ENCODE measurements at regions of chr7 and their contacts with region 1.

Region 1: GRCh38 chr7:125169088-125169487 is 239.5 kb upstream of the POT1 start:
- DNase-seq: no peak
- H3K4me3 Mint-ChIP-seq: no peak overlapping the region
- H3K27ac Mint-ChIP-seq: no peak overlapping the region
- H3K4me1 Mint-ChIP-seq: no peaks in the 10 kb centered on the region
- H3K27me3 Mint-ChIP-seq: no peaks in the 10 kb centered on the region

Region 2: GRCh38 chr7:125218076-125218475 is 49.0 kb after region 1 on chr7:
- intact Hi-C with region 1: loop called (anchors 10 kb)
- DNase-seq: no peak
- H3K4me3 Mint-ChIP-seq: no peak overlapping the region
- H3K27ac Mint-ChIP-seq: no peak overlapping the region
- H3K4me1 Mint-ChIP-seq: no peaks in the 10 kb centered on the region
- H3K27me3 Mint-ChIP-seq: no peaks in the 10 kb centered on the region